ENCODE measurements at regions of chr11 and their contacts with region 1.

Region 1: DNA sequence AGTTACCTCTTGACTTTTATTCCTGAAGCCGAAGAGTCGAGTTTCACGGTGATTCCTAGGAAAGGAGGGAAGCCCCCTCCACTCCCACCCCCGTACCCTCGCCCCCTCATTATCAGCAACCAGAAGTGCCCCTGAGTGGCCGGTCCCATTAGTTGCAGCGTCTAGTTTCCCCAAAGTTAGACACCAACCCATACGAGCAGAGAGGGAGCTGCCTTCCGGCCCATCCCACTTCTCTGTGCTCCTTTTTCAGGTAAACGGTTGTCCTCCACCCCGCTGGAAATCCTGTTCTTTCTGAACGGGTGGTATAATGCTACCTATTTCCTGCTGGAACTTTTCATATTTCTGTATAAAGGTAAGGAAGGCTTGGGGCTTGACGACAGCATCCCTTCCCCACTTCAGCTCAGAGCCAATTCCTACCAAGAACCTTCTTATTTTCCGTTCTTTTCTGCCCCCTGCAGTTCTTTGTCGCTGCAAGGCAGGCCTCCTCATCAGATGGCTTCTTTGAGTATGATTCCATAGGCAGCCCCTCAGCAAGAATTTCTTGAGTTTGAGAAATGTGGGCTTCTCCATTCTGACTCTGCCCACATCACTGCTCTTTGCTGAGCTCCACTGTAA is 701 bp downstream of the TMEM216 start:
- DNase-seq: no peak
- H3K4me3 Mint-ChIP-seq: peak overlapping the region; percentile 84
- H3K27ac Mint-ChIP-seq: peak overlapping the region; percentile 91
- H3K4me1 Mint-ChIP-seq: peaks cover 15% of the 10 kb centered on the region
- H3K27me3 Mint-ChIP-seq: no peaks in the 10 kb centered on the region

Region 2: DNA sequence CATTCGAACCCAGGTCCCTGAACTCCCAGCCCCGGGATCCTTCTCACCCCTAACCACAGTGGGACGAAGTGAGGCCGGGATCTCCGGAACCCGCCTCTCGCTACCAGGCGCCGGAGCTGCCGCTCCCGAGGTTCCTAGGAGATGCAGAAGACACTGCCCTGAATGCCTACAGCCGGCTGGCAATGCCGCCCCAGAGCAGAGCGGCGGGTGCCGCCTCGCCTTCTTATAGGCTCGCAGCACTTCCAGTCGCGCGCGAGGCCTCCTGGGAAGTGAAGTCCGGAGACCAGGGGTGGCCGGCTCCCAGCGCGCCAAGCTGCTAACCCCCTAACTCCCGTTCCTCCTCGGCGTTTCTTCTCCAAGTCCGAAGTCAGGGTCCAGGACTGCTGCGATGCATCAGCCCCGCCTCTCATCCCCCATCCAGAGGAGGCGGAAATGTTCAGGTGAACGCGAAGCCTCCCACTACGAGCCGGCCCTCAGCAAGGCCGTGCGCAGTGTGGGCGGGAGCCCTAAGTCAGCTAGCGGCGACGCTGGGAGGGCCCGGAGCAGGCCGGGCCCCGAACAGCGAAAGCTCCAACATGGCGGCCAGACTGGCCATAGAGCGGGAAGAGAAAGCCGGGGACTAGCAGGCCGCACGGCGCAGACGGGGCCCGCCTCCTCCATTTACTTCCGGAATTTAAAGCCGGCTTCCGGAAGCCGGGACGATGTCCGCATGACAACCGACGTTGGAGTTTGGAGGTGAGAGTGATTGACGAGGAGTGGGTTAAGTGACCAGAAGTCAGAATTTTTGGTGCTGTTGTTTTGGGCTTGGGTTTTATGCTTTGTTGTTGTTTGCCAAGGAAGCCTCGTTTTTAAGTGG is 31.2 kb before region 1 on chr11 and contains the starts of genes CYB561A3 and TMEM138:
- intact Hi-C with region 1: loop called (anchors 2 kb)
- DNase-seq: peak; percentile 91
- H3K4me3 Mint-ChIP-seq: peak within 1 kb of the TSS; percentile 100
- H3K27ac Mint-ChIP-seq: peak within 1 kb of the TSS; percentile 99
- H3K4me1 Mint-ChIP-seq: peaks cover 22% of the 10 kb centered on the region
- H3K27me3 Mint-ChIP-seq: no peaks in the 10 kb centered on the region
- total RNA-seq, gene CYB561A3: 32.9 and 34.1 TPM in 2 replicates
- total RNA-seq, gene TMEM138: 52.3 and 54.5 TPM in 2 replicates

Measured in activated T-helper 2 cell treated with anti-CD3 and anti-CD28 coated beads, Interferon-gamma antibody, Interleukin-2, Interleukin-4, amounts not matched to agents 10 μg/mL and 5 μg/mL and 100 μg/mL, durations not matched to agents 14 hours and 24 hours and 36 hours (primary cell).